ENCODE measurements at regions of chr1 and their contacts with region 1.

Region 1: DNA sequence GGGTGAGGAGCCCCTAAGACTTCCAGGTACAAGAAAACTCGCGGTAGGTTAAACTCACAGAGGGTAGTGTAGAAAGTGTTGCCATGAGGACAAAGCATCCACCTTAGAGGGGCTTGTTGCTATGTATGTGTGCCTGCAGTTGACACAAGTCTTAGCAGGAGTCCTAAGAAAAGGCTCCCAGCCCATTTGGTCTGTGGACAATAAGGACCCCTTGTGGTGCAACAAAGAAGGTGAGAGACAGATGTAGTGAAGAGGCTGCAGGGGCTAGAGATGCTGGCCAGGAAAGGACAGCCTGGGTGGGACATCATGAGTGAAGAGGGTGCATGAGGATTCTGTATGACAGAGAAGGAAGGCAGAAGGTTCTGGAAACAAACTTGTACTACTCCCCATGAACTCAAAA is 36.3 kb upstream of the IL10 start:
- DNase-seq: peak; percentile 66
- H3K4me3 Mint-ChIP-seq: no peak overlapping the region
- H3K27ac Mint-ChIP-seq: peak overlapping the region; percentile 3
- H3K4me1 Mint-ChIP-seq: peaks cover 45% of the 10 kb centered on the region
- H3K27me3 Mint-ChIP-seq: no peaks in the 10 kb centered on the region

Region 2: DNA sequence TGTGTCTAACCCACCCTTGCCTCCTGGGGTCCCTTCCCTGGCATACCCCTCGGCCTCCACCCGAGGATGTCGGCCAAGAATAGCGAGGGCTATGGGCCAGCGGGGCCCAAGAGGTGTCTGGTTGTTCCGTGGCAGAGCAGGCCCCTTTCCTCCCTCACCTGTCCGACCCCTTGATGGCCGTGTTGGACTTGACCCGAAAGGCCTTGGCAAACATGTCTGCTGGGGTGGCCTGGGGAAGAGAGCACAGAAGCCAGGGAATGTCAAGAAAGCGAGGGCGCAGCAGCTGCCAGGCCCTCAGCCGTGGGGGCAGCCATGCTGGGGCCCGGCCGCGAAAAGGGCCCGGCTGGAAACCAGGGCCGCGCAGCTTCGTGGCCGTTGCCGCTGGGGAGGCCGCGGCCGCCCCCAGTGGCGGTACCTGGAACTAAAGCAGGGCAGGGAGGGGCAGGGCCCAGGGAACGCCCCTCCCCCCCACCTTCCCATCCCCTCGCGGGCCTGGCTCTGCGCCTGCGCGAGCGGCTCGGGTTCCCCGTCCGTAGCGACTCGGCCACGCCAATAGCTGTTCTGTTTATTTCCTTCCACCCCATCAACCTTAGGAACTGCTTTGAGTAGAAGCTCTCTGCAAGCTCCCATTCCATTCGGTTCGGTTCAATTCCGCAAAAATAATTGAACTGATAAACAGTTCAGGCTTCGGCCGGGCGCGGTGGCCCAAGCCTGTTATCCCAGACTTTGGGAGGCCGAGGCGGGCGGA is 196.3 kb before region 1 on chr1 and contains the start of gene EIF2D:
- CTCF ChIA-PET with region 1: interaction called, 6 read pairs
- POLR2A ChIA-PET with region 1: no interaction called
- intact Hi-C with region 1: loop called (anchors 2 kb)
- DNase-seq: peak; percentile 96
- H3K4me3 Mint-ChIP-seq: peak within 1 kb of the TSS; percentile 96
- H3K27ac Mint-ChIP-seq: peak within 1 kb of the TSS; percentile 90
- H3K4me1 Mint-ChIP-seq: peaks cover 32% of the 10 kb centered on the region
- H3K27me3 Mint-ChIP-seq: no peaks in the 10 kb centered on the region
- total RNA-seq, gene EIF2D: 84.6 to 87.5 TPM

Region 3: DNA sequence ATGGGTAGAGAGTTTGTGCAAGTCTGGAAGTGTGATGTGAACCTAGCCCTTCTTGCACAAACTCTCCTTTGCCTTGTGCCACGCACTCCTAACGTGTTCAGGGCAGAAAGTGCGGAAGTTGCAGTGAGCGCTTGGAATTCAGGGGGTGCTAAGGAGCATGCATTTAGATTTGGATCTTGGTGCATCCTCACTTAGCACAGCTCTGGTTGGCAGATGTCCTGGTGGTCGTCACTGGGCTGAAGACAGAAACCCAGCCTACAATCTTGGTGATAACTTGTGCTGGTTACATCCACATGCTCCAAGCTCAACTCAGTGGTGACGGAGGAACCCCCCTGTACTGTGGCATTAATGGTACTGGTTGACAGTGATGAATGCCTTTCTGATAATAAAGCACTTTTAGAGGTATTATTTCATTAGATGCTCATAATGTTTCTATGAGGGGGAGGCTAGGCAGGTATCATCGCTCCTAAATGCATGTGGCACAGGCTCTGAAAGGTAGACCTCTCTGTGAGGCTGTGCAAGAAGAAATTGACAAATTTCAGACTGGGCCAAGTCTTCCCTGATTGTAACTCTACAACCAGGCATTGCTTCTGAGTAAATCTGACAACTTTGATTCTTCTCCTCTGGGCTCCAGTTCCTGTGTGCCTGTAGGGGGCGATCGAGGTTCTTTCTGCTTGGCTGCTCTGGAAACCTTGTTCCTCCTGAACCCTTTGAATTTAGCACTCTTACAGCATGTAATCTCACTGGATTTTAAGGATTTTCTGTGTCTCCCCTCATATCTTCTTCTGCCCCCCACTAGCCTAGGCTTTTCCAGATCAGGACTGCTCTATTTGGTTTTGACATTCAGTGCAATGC is 83.3 kb before region 1 on chr1:
- CTCF ChIA-PET with region 1: interaction called, 137 read pairs
- POLR2A ChIA-PET with region 1: interaction called, 3 read pairs
- intact Hi-C with region 1: loop called (anchors 1 kb)
- DNase-seq: peak; percentile 77
- H3K4me3 Mint-ChIP-seq: no peak overlapping the region
- H3K27ac Mint-ChIP-seq: peak overlapping the region; percentile 33
- H3K4me1 Mint-ChIP-seq: peaks cover 50% of the 10 kb centered on the region
- H3K27me3 Mint-ChIP-seq: no peaks in the 10 kb centered on the region

Region 4: GRCh38 chr1:206766251-206766856 is 42.3 kb before region 1 on chr1:
- CTCF ChIA-PET with region 1: interaction called, 22 read pairs
- POLR2A ChIA-PET with region 1: interaction called, 44 read pairs
- intact Hi-C with region 1: loop called (anchors 1 kb)
- DNase-seq: peak; percentile 84
- H3K4me3 Mint-ChIP-seq: peak overlapping the region; percentile 44
- H3K27ac Mint-ChIP-seq: peak overlapping the region; percentile 68
- H3K4me1 Mint-ChIP-seq: peaks cover 69% of the 10 kb centered on the region
- H3K27me3 Mint-ChIP-seq: peaks cover 6% of the 10 kb centered on the region

Region 5: DNA sequence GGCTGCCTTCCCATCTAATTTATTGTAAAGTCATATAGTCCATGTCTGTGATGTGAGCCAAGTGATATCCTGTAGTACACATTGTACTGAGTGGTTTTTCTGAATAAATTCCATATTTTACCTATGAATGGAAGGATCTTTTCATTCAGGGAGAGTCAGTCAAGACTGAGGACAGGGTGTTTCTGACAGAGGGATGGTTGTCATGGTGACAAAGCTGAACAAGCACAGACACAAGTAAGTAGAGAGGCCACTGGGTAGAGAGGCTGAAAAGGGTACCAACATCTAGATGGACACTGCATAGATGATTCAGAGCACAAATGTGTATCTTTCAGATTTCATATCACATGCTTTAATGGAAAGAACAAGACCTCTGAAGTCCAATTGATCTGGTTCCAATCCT is 34.2 kb after region 1 on chr1:
- CTCF ChIA-PET with region 1: no interaction called
- POLR2A ChIA-PET with region 1: no interaction called
- intact Hi-C with region 1: no loop called
- DNase-seq: no peak
- H3K4me3 Mint-ChIP-seq: no peak overlapping the region
- H3K27ac Mint-ChIP-seq: no peak overlapping the region
- H3K4me1 Mint-ChIP-seq: peaks cover 3% of the 10 kb centered on the region
- H3K27me3 Mint-ChIP-seq: peaks cover 2% of the 10 kb centered on the region

Region 6: GRCh38 chr1:206872139-206872538 is 63.5 kb after region 1 on chr1:
- CTCF ChIA-PET with region 1: no interaction called
- POLR2A ChIA-PET with region 1: no interaction called
- intact Hi-C with region 1: no loop called
- DNase-seq: no peak
- H3K4me3 Mint-ChIP-seq: no peak overlapping the region
- H3K27ac Mint-ChIP-seq: no peak overlapping the region
- H3K4me1 Mint-ChIP-seq: no peaks in the 10 kb centered on the region
- H3K27me3 Mint-ChIP-seq: peaks cover 8% of the 10 kb centered on the region

Region 7: DNA sequence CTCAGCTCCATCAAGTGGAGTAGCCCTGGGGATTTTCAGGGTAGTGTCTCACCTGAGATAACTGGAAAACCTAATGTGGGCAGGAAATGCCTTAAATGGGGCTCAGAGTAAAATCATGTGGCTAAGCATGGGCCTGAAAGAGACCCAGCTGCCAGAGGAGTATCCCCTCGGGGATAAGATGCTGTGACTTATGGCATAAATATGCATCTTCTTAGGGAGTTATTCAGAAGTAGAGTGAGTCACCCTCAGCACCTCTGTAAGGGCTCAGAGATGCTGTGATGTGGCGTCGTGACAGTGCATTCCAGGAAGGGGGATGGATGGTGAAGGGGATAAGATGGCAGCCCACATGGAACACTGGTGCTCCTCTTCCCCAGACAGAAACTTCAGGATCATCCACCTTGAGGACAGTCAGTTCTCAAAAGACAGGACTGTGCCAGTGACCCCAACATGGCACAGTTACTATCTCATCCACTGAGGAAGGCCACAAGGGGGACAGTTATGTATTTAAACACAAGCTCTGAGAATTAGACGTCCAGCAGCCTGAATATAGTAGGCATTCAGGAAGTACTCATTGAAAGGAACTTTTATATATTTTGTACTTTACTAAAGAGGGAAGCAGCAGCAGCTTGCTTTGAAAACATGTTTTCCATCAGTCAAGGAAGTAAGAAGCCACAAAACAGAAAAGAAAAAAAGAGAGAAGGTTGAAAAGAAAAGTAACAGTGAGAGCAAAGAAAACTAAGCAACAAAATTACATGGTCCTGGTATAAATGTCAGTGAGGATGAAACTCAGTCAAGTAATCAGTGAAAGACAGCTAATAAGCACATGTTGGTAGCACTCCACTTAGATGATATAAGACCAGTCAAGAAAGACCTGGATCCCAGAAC is 96.9 kb after region 1 on chr1:
- CTCF ChIA-PET with region 1: interaction called, 20 read pairs
- POLR2A ChIA-PET with region 1: interaction called, 3 read pairs
- intact Hi-C with region 1: no loop called
- DNase-seq: peak; percentile 74
- H3K4me3 Mint-ChIP-seq: peak overlapping the region; percentile 33
- H3K27ac Mint-ChIP-seq: peak overlapping the region; percentile 83
- H3K4me1 Mint-ChIP-seq: peaks cover 69% of the 10 kb centered on the region
- H3K27me3 Mint-ChIP-seq: no peaks in the 10 kb centered on the region

Region 8: DNA sequence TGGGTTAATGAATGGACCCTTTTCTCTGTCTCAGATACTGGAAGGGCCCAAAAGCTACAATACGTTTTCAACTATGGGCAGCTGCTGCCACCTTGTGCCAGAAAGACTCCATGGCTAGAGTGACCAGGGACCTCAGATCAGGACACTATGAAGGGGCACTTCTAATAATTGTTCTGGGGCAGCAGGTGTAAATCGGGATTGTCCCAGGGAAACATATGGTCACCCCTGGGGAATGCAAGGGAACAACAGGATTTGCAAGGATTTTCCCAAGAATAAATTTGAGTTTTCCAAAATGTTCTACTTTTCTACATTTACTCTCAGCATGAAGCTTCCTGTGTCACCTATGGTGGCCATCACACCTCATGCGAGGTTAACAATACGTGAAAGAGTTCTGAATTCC is 173.6 kb after region 1 on chr1:
- CTCF ChIA-PET with region 1: interaction called, 30 read pairs
- POLR2A ChIA-PET with region 1: no interaction called
- intact Hi-C with region 1: loop called (anchors 1 kb)
- DNase-seq: peak; percentile 72
- H3K4me3 Mint-ChIP-seq: no peak overlapping the region
- H3K27ac Mint-ChIP-seq: no peak overlapping the region
- H3K4me1 Mint-ChIP-seq: no peaks in the 10 kb centered on the region
- H3K27me3 Mint-ChIP-seq: peaks cover 15% of the 10 kb centered on the region

Measured in activated CD4-positive, alpha-beta memory T cell treated with anti-CD3 and anti-CD28 coated beads for 36 hours (primary cell).